ENCODE measurements at regions of chr16 and their contacts with region 1.

Region 1: GRCh38 chr16:66728117-66728787 is 23.2 kb downstream of the DYNC1LI2 start:
- DNase-seq: no peak
- H3K4me3 ChIP-seq: no peak overlapping the region
- H3K27me3 ChIP-seq: no peaks in the 10 kb centered on the region
- CTCF ChIP-seq: peak; percentile 60

Region 2: DNA sequence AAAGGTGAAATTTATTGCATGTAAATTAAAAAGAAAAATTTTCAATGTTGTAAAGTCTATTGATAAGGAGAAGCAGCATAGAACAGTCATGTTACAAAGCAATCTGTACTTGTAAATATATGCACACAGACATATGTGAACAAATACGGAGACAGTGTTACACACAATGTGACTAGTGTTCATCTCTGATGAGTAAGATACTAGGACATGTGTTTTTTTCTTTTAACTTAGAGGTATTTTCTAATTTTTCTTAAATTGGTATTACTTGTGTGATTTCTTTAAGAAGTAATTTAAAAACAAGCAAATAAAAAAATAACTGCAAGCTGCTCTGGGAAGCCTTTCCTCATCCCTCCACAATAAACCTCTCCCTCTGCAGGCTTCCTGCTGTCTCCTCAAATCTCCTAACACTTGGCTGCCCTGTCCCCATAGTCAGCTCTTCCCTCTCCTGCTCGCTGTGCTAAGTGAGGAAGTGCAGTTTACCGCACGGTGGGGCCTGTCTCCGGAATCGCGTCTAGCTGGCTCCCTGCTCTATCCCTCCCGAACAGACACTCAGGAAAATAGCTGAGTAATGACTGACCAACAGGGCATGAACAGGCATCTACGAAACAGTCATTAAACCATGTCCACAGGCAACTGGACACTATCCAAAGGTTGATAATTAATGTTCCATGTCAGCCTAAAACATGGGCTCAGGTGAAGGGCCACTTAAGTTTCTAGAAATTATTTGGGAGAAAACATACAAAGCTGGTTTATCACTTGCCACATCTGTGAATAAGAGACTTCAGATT is 67.6 kb before region 1 on chr16:
- CTCF ChIA-PET with region 1: interaction called, 10 read pairs
- POLR2A ChIA-PET with region 1: no interaction called
- DNase-seq: peak; percentile 85
- H3K4me3 ChIP-seq: no peak overlapping the region
- H3K27me3 ChIP-seq: no peaks in the 10 kb centered on the region
- CTCF ChIP-seq: peak; percentile 58

Region 3: DNA sequence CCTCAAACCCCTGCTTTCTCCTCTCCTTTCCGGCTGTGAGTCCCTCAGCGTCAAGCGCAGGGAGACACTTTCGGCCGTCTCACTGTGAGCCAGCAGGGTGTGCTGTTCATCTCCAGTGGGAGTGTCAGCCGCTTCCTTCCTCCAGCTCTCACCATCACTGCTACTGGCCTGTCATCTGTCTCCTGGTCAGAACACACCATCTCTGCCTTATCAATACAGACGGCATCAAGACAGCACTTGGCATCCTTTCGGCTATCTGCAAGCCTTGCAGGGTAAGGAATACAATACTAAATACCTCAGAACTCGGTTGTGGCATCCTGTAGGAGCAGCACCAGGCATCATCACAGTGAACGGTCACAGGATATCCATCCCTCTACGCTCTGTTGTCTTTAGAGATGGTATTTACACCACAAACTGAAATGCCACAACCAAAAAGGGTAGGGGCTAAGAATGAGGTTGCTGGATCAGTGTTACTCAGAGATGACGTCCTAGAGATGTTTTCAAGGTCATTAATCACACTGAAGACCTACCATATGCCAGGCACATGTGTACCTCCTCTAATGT is 11.1 kb before region 1 on chr16:
- CTCF ChIA-PET with region 1: interaction called, 16 read pairs
- POLR2A ChIA-PET with region 1: no interaction called
- DNase-seq: no peak
- H3K4me3 ChIP-seq: no peak overlapping the region
- H3K27me3 ChIP-seq: no peaks in the 10 kb centered on the region
- CTCF ChIP-seq: peak; percentile 73

Region 4: DNA sequence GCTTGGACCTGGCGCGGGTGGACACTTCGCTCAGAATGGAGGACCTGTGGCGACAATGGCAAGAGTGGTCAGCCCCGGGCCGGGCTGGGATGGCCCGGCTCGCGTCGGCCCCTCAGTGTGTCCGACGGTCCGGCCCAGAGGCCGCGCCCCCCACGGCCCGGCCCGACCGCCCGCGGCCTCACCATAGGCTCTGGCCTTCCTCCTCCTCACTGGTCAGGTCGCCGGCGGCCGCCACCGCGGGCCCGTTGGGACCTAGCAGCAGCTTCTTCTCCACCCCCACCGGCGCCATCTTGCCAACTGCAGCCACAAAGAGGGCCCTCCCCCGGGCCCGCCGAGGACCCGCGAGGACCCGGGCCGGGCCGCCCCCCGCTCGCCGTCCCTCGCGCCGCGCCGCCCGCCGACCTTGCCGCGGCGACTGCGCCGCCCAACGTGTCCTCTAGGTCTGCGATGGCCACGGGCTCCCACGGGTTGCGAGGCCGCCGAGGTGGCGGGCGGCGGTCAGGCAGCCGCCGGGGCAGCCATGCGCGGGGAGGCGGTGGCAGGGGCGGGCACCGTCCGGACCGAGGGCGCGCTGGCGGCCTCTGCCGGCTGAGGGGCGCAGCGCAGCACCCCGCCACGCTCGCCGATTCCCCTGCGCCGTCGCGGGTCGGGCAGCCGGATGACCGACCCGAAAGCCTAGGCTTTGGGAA is 23.2 kb after region 1 on chr16 and contains the start of gene DYNC1LI2:
- CTCF ChIA-PET with region 1: interaction called, 11 read pairs
- POLR2A ChIA-PET with region 1: no interaction called
- DNase-seq: no peak
- H3K4me3 ChIP-seq: peak within 1 kb of the TSS; percentile 98
- H3K27me3 ChIP-seq: no peaks in the 10 kb centered on the region; the same call in 1 of the 2 replicates
- CTCF ChIP-seq: peak; percentile 51
- polyA plus RNA-seq, gene DYNC1LI2: 82.0 and 82.8 TPM in 2 replicates

Region 5: DNA sequence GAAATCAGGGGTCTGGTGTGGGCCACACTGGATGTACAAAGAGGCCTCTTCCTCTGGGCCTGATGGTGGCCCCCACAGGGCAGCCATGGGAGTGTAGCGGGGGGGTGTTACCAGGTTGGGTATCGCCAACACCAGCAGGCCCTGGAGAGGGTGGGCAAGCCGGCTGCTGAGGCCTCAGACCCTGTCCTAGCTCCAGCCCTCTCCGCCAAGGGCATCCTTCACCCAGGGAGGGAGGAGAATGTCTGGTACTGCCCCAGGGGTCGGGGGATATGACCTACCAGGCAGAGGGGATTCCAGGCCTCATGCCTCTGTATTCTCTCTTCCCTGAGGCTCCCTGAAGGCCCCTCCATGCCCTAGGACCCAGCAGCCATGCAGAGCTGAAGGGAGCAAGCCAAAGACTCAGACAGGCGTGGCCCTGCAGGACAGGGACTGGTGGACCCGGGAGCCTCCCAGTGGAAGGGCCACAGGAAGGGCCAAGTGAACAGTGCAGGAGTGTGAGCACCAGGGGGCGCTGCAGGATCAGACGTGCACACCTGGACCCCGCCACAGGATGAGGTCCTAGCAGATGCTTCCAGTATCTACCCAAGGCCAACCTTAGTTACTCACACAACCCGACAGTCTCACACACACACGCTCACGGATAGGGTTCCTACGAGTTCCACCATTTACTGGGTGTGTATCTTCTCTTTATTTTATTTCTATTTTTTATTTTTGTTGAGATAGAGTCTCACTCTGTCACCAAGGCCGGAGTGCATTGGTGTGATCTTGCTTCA is 249.3 kb after region 1 on chr16:
- CTCF ChIA-PET with region 1: no interaction called
- POLR2A ChIA-PET with region 1: no interaction called
- DNase-seq: no peak
- H3K4me3 ChIP-seq: no peak overlapping the region
- H3K27me3 ChIP-seq: no peaks in the 10 kb centered on the region
- CTCF ChIP-seq: peak; percentile 92

Region 6: DNA sequence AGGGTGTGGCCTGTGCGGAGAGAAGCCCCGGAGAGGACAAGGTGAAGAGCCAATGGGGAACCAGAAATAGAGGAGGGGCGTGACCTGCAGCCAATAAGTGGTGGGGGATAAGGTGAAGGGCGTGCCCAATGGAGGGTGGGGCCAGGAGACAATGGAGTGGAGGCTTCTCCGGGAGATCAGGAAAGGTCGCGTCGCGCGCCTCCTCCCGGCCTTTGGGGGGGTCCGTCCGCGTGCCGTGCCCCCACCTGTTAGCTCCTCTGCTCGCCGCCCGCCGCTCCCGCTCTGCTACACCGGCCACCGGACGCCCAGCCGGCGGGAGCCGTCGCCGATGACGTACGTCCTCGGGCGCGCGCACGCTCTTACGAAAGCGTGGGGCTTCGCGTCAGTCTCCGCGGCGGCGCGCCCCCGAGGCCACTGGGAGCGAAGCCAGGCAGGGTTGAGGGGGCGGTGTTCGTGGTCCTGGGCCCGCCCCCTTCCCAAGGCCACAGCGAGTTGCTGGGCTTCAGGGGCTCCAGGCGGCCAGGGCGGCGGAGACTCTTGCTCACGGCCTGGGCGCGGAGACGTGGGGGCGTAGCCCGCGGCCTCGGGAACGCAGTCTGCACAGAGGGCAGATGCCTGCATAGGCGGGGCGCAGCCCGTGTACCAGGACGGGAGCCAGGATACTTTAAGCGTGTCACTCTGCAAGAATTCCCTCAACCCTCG is 455.5 kb after region 1 on chr16 and contains the start of gene MATCAP1:
- CTCF ChIA-PET with region 1: no interaction called
- POLR2A ChIA-PET with region 1: no interaction called
- DNase-seq: peak; percentile 83
- H3K4me3 ChIP-seq: peak within 1 kb of the TSS; percentile 60
- H3K27me3 ChIP-seq: no peaks in the 10 kb centered on the region
- CTCF ChIP-seq: no peak
- polyA plus RNA-seq, gene MATCAP1: 8.7 and 13.1 TPM in 2 replicates

Measured in BJ (cell line).